PC-9 (cell line): ENCODE measurements at regions of chr9 and their contacts with region 1.

Region 1: GRCh38 chr9:129610473-129611301 is 10.2 kb downstream of the C9orf50 start:
- DNase-seq: peak in 1 of 2 experiments; percentile 77
- H3K4me3 ChIP-seq: peak overlapping the region; percentile 93
- H3K27ac ChIP-seq: peak overlapping the region; percentile 62
- H3K4me1 ChIP-seq: peaks cover 32% of the 10 kb centered on the region
- H3K27me3 ChIP-seq: no peaks in the 10 kb centered on the region
- CTCF ChIP-seq: peak; percentile 85

Region 2: DNA sequence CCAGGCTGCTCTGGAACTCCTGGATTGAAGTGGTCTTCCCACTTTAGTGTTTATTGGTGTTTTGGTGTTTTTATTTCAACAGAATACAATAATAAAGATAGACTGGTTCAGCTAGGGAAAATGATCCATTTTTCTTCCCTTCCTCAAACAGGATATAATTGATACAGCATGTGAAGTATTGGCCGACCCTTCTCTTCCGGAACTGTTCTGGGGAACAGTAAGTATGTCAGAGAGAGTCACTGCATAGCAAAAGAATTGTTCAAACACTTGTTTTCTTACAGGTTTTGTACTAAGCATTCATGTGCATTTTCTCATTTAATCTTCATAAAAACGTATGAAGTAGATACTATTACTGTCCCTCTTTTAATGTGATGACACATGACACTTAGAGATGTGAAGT is 631.6 kb before region 1 on chr9:
- CTCF ChIA-PET with region 1: no interaction called
- POLR2A ChIA-PET with region 1: no interaction called
- intact Hi-C with region 1: no loop called
- DNase-seq: no peak
- H3K4me3 ChIP-seq: no peak overlapping the region
- H3K27ac ChIP-seq: no peak overlapping the region
- H3K4me1 ChIP-seq: no peaks in the 10 kb centered on the region
- H3K27me3 ChIP-seq: no peaks in the 10 kb centered on the region
- CTCF ChIP-seq: no peak

Region 3: GRCh38 chr9:129139993-129140396 is 470.7 kb before region 1 on chr9:
- CTCF ChIA-PET with region 1: interaction called, 4 read pairs
- POLR2A ChIA-PET with region 1: interaction called, 3 read pairs
- intact Hi-C with region 1: loop called (anchors 1 kb)
- DNase-seq: peak; percentile 85 to 95
- H3K4me3 ChIP-seq: peak overlapping the region; percentile 91
- H3K27ac ChIP-seq: peak overlapping the region; percentile 100
- H3K4me1 ChIP-seq: peaks cover 43% of the 10 kb centered on the region
- H3K27me3 ChIP-seq: no peaks in the 10 kb centered on the region
- CTCF ChIP-seq: no peak

Region 4: GRCh38 chr9:129333953-129334724 is 276.5 kb before region 1 on chr9:
- CTCF ChIA-PET with region 1: interaction called, 17 read pairs
- POLR2A ChIA-PET with region 1: interaction called, 5 read pairs
- intact Hi-C with region 1: loop called (anchors 1 kb)
- DNase-seq: peak; percentile 98 to 99
- H3K4me3 ChIP-seq: peak overlapping the region; percentile 43; the same call in 1 of the 2 replicates
- H3K27ac ChIP-seq: peak overlapping the region; percentile 94
- H3K4me1 ChIP-seq: peaks cover 45% of the 10 kb centered on the region
- H3K27me3 ChIP-seq: no peaks in the 10 kb centered on the region
- CTCF ChIP-seq: no peak; the same call in 1 of the 2 replicates

Region 5: DNA sequence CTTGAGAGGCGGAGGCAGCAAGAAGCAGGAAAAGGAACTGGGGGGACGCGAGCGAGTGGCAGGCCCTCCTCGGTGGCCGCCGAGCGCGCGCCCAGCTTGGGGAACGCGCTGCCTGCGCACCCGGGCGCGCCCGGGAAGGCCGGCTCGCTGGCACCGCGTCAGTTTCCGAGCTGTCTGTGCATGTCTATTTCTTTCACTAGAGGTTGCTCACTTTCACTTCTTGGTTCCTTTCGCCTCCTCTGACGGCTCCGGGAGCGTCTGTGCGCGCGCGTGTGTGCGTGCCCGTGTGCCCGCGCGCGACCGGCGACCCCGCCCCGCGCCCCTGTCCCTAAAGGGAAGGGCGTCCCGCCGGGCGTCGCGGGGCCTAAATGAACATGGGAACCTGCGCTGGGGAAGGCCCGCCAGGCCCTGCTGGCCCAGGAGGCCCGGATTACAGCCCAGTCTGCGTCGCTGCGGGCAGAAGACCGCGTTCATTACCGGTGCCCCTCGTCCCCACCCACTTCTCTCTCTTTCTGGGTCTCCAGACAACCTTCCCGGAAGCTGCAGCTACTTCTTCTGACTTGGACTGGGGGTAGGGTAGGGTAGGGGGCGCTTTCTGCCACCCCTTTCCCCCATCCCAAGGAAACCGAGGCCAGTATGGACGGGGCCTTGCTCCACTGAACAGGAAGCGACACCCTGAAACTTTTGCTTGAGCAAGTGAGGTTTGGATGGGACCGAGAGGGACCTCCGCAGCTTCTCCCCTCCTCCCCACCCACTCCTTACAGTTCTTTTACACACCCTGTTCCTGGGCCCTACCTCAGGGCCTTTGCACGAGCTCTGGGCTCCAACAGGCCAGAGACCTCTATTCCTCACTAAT is 226.9 kb before region 1 on chr9:
- CTCF ChIA-PET with region 1: interaction called, 3 read pairs
- POLR2A ChIA-PET with region 1: no interaction called
- intact Hi-C with region 1: loop called (anchors 1 kb)
- DNase-seq: peak; percentile 50 to 68
- H3K4me3 ChIP-seq: peak overlapping the region; percentile 85
- H3K27ac ChIP-seq: peak overlapping the region; percentile 96
- H3K4me1 ChIP-seq: peaks cover 22% of the 10 kb centered on the region
- H3K27me3 ChIP-seq: no peaks in the 10 kb centered on the region
- CTCF ChIP-seq: no peak

Region 6: DNA sequence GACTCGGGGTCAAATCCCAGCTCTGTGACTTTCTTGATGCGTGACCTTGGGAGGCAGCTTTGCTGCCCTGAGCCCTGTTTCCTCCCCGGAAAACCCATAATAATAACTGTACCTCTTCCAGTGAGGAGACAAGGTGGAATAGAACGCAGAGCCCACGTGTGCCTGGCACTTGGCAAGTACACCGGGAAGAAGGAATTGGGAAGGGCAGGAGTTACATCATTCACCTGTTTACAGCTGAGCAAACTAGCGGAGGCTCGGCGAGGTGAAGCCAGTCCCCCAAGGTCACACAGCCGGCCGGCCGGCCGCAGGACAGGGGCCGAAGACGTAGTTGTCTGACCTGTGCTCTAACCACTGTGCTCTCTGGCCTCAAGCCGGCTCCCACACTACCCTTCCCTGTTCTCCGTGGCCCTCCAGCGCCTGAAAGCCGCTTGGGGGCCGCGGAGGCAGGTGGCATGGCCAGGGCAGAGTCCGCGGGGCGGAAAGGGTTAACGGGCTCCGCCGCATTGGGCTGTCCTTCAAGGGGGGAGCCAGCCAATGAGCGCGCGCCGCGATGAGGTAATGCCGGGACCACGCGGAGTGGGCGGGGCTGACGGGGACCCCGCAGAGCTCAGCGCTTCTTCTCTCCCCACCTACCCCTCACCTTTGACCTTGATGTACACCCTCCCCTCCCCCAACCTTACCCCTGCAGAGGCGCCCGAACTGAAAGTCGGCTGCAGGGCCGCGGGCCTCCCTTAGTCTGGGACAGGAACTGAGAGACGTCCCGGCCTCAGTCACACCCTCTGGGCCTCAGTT is 115.0 kb before region 1 on chr9:
- CTCF ChIA-PET with region 1: no interaction called
- POLR2A ChIA-PET with region 1: no interaction called
- intact Hi-C with region 1: loop called (anchors 2 kb)
- DNase-seq: peak; percentile 78 to 95
- H3K4me3 ChIP-seq: peak overlapping the region; percentile 60
- H3K27ac ChIP-seq: peak overlapping the region; percentile 64
- H3K4me1 ChIP-seq: peaks cover 52% of the 10 kb centered on the region
- H3K27me3 ChIP-seq: no peaks in the 10 kb centered on the region
- CTCF ChIP-seq: no peak